MCF 10A (cell line): ENCODE measurements at regions of chr6 and their contacts with region 1.

Region 1: DNA sequence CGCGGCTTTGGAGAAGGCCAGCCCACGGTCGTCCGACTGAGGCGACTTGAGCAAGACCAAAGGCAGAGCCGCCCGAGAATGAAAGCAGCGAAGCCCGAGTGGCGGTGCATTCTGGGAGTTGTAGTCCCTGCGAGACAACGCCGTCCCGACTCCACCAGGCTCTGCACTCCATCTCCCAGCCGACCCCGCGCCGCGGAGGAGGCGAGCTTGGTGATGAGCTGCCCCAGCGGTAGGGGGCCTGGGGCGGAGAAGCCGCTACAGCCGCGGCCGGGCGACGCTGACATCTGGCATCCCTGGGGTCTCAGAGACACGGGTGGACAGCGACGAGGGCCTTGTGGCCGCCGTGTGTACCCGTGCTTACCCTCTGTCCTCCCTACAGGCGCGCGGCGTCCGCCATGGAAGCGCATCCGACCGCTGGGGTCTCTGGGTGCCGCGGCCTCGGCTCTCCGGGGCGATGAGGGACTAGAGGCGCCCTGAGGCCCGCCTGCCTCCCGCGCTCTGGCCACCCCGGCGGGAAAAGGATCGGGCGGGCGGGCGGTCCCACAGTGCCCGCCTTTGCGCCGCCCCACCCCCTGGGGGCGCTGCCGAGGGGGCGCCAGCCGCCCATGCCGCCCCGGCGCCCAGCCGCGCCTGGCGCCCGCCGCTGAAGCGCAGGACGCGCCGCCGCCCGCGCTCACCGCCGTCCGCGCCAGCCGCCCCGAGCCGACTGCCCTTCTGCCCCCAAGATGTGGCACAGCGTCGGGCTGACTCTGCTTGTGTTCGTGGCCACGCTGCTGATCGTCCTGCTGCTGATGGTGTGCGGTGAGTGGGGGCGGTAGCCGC is at the start of gene SMIM13:
- DNase-seq: peak; percentile 97
- H3K4me3 Mint-ChIP-seq: peak within 1 kb of the TSS; percentile 96
- H3K27ac Mint-ChIP-seq: peak within 1 kb of the TSS; percentile 71
- H3K4me1 Mint-ChIP-seq: peaks cover 11% of the 10 kb centered on the region
- H3K27me3 Mint-ChIP-seq: no peaks in the 10 kb centered on the region
- CTCF ChIP-seq: peak; percentile 51
- total RNA-seq, gene SMIM13: 28.1 and 29.8 TPM in 2 replicates

Region 2: GRCh38 chr6:11111769-11112437 is 18.1 kb after region 1 on chr6:
- CTCF ChIA-PET with region 1: interaction called, 6 read pairs
- POLR2A ChIA-PET with region 1: interaction called, 26 read pairs
- intact Hi-C with region 1: no loop called
- DNase-seq: no peak
- H3K4me3 Mint-ChIP-seq: no peak overlapping the region
- H3K27ac Mint-ChIP-seq: no peak overlapping the region
- H3K4me1 Mint-ChIP-seq: peaks cover 10% of the 10 kb centered on the region
- H3K27me3 Mint-ChIP-seq: no peaks in the 10 kb centered on the region
- CTCF ChIP-seq: no peak

Region 3: GRCh38 chr6:11120271-11121005 is 26.6 kb after region 1 on chr6:
- CTCF ChIA-PET with region 1: interaction called, 4 read pairs
- POLR2A ChIA-PET with region 1: interaction called, 26 read pairs
- intact Hi-C with region 1: no loop called
- DNase-seq: peak; percentile 73
- H3K4me3 Mint-ChIP-seq: no peak overlapping the region
- H3K27ac Mint-ChIP-seq: peak overlapping the region; percentile 63
- H3K4me1 Mint-ChIP-seq: peaks cover 50% of the 10 kb centered on the region
- H3K27me3 Mint-ChIP-seq: no peaks in the 10 kb centered on the region
- CTCF ChIP-seq: no peak

Region 4: GRCh38 chr6:11139056-11139960 is 45.5 kb after region 1 on chr6:
- CTCF ChIA-PET with region 1: interaction called, 3 read pairs
- POLR2A ChIA-PET with region 1: interaction called, 31 read pairs
- intact Hi-C with region 1: loop called (anchors 1 kb)
- DNase-seq: peak; percentile 94
- H3K4me3 Mint-ChIP-seq: peak overlapping the region; percentile 2
- H3K27ac Mint-ChIP-seq: peak overlapping the region; percentile 77
- H3K4me1 Mint-ChIP-seq: peaks cover 41% of the 10 kb centered on the region
- H3K27me3 Mint-ChIP-seq: no peaks in the 10 kb centered on the region
- CTCF ChIP-seq: no peak

Region 5: GRCh38 chr6:11163932-11164331 is 70.1 kb after region 1 on chr6:
- CTCF ChIA-PET with region 1: no interaction called
- POLR2A ChIA-PET with region 1: no interaction called
- intact Hi-C with region 1: no loop called
- DNase-seq: no peak
- H3K4me3 Mint-ChIP-seq: no peak overlapping the region
- H3K27ac Mint-ChIP-seq: no peak overlapping the region
- H3K4me1 Mint-ChIP-seq: peaks cover 13% of the 10 kb centered on the region
- H3K27me3 Mint-ChIP-seq: no peaks in the 10 kb centered on the region
- CTCF ChIP-seq: no peak

Region 6: DNA sequence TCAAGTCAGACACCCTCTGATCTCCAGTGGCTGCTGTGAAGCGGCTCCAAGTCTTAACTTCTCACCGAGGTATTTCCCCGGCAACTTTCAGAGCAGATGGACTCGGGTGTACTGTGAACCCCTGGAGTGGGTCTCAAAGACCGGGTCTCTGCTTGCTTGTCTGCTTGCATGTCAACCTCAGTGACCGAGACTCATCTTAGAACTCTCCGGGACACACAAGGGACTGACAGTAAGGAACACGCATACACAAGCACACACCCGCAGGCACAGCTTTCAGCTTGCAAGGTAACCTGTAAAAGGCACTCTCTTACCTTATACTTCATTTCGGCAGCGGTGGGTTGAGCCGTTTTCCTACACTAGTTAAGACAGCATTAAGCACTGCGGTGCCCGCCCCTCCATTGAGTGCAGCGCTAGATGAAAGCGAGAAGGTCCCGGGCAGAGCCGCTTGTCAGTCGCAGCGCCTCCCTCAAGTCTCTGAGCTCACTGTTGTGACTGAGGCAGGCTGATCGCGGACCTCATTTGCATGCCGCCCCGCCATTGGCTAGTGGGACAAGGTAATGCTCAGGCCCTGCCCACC is 138.5 kb after region 1 on chr6 and contains the start of gene NEDD9:
- CTCF ChIA-PET with region 1: interaction called, 3 read pairs
- POLR2A ChIA-PET with region 1: no interaction called
- intact Hi-C with region 1: loop called (anchors 5 kb)
- DNase-seq: peak; percentile 97
- H3K4me3 Mint-ChIP-seq: peak within 1 kb of the TSS; percentile 73
- H3K27ac Mint-ChIP-seq: peak within 1 kb of the TSS; percentile 85
- H3K4me1 Mint-ChIP-seq: peaks cover 41% of the 10 kb centered on the region
- H3K27me3 Mint-ChIP-seq: no peaks in the 10 kb centered on the region
- CTCF ChIP-seq: no peak
- total RNA-seq, gene NEDD9: 2.2 and 4.4 TPM in 2 replicates

Region 7: GRCh38 chr6:11575408-11576033 is 481.7 kb after region 1 on chr6:
- CTCF ChIA-PET with region 1: interaction called, 6 read pairs
- POLR2A ChIA-PET with region 1: interaction called, 5 read pairs
- intact Hi-C with region 1: loop called (anchors 10 kb)
- DNase-seq: peak; percentile 86
- H3K4me3 Mint-ChIP-seq: peak overlapping the region; percentile 12
- H3K27ac Mint-ChIP-seq: no peak overlapping the region
- H3K4me1 Mint-ChIP-seq: no peaks in the 10 kb centered on the region
- H3K27me3 Mint-ChIP-seq: no peaks in the 10 kb centered on the region
- CTCF ChIP-seq: peak; percentile 86